Endothelial cell of umbilical vein (primary cell): ENCODE measurements at regions of chr19 and their contacts with region 1.

Region 1: GRCh38 chr19:18117692-18118378 is 20.3 kb downstream of the MAST3 start:
- DNase-seq: peak; percentile 83
- H3K4me3 ChIP-seq: peak overlapping the region; percentile 33 to 63 (median 51)
- H3K27ac ChIP-seq: no peak overlapping the region
- H3K4me1 ChIP-seq: peaks cover 10% of the 10 kb centered on the region
- H3K27me3 ChIP-seq: no peaks in the 10 kb centered on the region
- CTCF ChIP-seq: peak in 1 of 2 donors; percentile 32
- POLR2A ChIP-seq: no peak

Region 2: DNA sequence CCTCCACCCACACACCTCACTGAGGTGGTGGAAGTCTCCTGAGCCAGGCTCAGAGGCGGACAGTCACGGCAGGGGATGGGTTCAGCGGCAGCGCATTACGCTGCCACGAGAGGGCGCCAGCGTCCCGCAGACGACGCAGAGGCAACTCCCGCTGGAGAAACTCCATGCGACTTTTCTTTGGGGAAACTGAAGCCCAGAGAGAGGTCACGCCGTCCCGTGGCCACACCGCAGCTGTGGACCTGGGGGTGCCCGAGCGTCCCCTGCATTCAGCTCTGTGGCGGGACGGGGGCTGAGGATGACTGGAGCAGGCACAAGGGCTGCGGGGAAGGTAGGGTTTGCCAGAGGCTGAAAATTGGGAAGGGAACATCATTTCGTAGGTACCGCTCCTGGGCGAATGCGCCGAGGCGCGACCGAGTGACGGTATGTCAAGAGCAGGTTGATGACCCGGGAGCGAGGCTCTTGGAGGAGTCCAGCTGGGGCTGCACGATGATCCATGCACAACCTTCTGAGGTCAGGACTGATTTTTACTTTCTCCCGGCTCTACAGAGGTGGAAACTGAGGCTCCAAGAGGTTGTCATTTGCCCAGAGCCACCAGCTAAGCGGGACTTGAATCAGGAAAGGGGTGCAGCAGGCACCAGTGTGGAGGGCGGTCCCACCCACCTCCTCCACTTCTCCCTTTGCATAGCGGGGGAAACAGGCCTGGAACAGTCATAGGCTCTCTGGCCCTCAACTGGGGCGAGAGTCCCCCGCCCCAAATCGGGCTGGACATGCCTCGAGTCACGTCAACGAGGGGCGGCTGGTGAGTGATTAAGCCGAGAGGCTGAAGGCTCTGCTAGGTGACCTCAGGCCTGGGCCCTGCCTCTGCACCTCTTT is 110.6 kb before region 1 on chr19:
- CTCF ChIA-PET with region 1: interaction called, 7 read pairs
- POLR2A ChIA-PET with region 1: no interaction called
- dilution Hi-C with region 1: no loop called
- intact Hi-C with region 1: loop called (anchors 1 kb)
- DNase-seq: peak; percentile 80
- H3K4me3 ChIP-seq: peak overlapping the region in 2 of 3 experiments; percentile 18 to 37
- H3K27ac ChIP-seq: peak overlapping the region; percentile 22
- H3K4me1 ChIP-seq: peaks cover 9% of the 10 kb centered on the region
- H3K27me3 ChIP-seq: no peaks in the 10 kb centered on the region
- CTCF ChIP-seq: peak; percentile 94 to 96
- POLR2A ChIP-seq: no peak

Region 3: DNA sequence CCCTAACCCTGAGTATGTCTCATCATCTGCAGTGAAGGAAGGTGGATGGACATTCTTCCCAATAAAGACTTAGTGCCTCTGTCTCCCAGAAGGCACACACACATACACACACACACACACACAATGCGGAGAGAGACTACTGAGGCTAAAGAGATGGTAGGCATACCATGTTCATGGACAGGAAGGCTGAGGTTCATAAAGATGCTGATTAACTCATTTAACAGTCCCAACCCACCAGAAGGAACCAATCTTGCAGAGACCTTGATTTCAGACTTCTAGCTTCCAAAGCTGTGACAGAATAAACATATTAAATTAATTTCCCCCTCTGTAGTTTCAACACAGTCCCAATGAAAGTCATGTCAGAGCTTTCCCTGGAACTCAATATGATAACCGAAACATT is 76.8 kb before region 1 on chr19:
- CTCF ChIA-PET with region 1: no interaction called
- POLR2A ChIA-PET with region 1: no interaction called
- dilution Hi-C with region 1: no loop called
- intact Hi-C with region 1: no loop called
- DNase-seq: no peak
- H3K4me3 ChIP-seq: no peak overlapping the region
- H3K27ac ChIP-seq: no peak overlapping the region
- H3K4me1 ChIP-seq: peaks cover 5% of the 10 kb centered on the region
- H3K27me3 ChIP-seq: peaks cover 9 to 13% of the 10 kb centered on the region in 2 experiments
- CTCF ChIP-seq: no peak
- POLR2A ChIP-seq: no peak

Region 4: GRCh38 chr19:18128044-18128443 is 10.2 kb after region 1 on chr19:
- CTCF ChIA-PET with region 1: interaction called, 34 read pairs
- POLR2A ChIA-PET with region 1: no interaction called
- dilution Hi-C with region 1: no loop called
- intact Hi-C with region 1: no loop called
- DNase-seq: no peak
- H3K4me3 ChIP-seq: no peak overlapping the region
- H3K27ac ChIP-seq: no peak overlapping the region
- H3K4me1 ChIP-seq: no peaks in the 10 kb centered on the region
- H3K27me3 ChIP-seq: no peaks in the 10 kb centered on the region
- CTCF ChIP-seq: no peak
- POLR2A ChIP-seq: no peak

Region 5: DNA sequence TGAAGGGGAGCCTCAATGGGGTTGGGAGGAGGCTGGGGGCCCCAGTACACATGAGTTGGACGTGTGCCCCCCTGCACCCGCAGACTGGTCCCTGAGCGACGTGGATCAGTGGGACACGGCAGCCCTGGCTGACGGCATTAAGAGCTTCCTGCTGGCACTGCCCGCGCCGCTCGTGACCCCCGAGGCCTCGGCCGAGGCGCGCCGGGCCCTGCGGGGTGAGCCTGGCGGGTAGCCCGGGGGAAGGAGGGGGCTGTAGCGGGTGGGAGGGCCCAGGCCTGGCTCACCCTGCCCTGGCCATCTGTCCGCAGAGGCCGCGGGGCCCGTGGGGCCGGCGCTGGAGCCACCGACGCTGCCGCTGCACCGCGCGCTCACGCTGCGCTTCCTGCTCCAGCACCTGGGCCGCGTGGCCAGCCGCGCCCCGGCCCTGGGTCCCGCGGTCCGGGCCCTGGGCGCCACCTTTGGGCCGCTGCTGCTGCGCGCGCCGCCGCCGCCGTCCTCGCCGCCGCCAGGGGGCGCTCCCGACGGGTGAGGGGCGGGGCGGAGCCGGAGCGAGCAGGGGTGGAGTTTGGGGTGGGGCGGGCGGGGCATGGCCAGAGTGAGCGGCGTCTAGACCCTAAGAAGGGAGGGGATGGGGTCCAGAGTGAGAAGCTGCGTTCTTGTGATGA is 43.3 kb after region 1 on chr19:
- CTCF ChIA-PET with region 1: interaction called, 138 read pairs
- POLR2A ChIA-PET with region 1: no interaction called
- dilution Hi-C with region 1: no loop called
- intact Hi-C with region 1: no loop called
- DNase-seq: peak; percentile 45
- H3K4me3 ChIP-seq: peak overlapping the region in 1 of 3 experiments; percentile 21
- H3K27ac ChIP-seq: no peak overlapping the region
- H3K4me1 ChIP-seq: peaks cover 14% of the 10 kb centered on the region
- H3K27me3 ChIP-seq: no peaks in the 10 kb centered on the region
- CTCF ChIP-seq: peak; percentile 35 to 36
- POLR2A ChIP-seq: peak; percentile 21

Region 6: GRCh38 chr19:18183529-18183928 is 65.7 kb after region 1 on chr19:
- CTCF ChIA-PET with region 1: interaction called, 12 read pairs
- POLR2A ChIA-PET with region 1: no interaction called
- dilution Hi-C with region 1: no loop called
- intact Hi-C with region 1: no loop called
- DNase-seq: no peak
- H3K4me3 ChIP-seq: no peak overlapping the region
- H3K27ac ChIP-seq: no peak overlapping the region
- H3K4me1 ChIP-seq: no peaks in the 10 kb centered on the region
- H3K27me3 ChIP-seq: no peaks in the 10 kb centered on the region
- CTCF ChIP-seq: no peak
- POLR2A ChIP-seq: no peak

Region 7: GRCh38 chr19:18251587-18252369 is 133.9 kb after region 1 on chr19:
- CTCF ChIA-PET with region 1: interaction called, 210 read pairs
- POLR2A ChIA-PET with region 1: interaction called, 3 read pairs
- dilution Hi-C with region 1: no loop called
- intact Hi-C with region 1: loop called (anchors 1 kb)
- DNase-seq: peak; percentile 70
- H3K4me3 ChIP-seq: no peak overlapping the region
- H3K27ac ChIP-seq: no peak overlapping the region
- H3K4me1 ChIP-seq: no peaks in the 10 kb centered on the region
- H3K27me3 ChIP-seq: peaks cover 0 to 8% of the 10 kb centered on the region in 2 experiments
- CTCF ChIP-seq: peak; percentile 82 to 92
- POLR2A ChIP-seq: no peak